ENCODE measurements at regions of chr19 and their contacts with region 1.

Region 1: GRCh38 chr19:5961969-5962945 is 15.7 kb downstream of the RANBP3 start:
- DNase-seq: peak; percentile 93
- H3K4me3 Mint-ChIP-seq: peak overlapping the region; percentile 80
- H3K27ac Mint-ChIP-seq: peak overlapping the region; percentile 98
- H3K4me1 Mint-ChIP-seq: peaks cover 59% of the 10 kb centered on the region
- H3K27me3 Mint-ChIP-seq: no peaks in the 10 kb centered on the region

Region 2: GRCh38 chr19:5977785-5978605 is 15.7 kb after region 1 on chr19 and contains the start of gene RANBP3:
- intact Hi-C with region 1: loop called (anchors 2 kb)
- DNase-seq: peak; percentile 100
- H3K4me3 Mint-ChIP-seq: peak within 1 kb of the TSS; percentile 94
- H3K27ac Mint-ChIP-seq: peak within 1 kb of the TSS; percentile 93
- H3K4me1 Mint-ChIP-seq: peaks cover 55% of the 10 kb centered on the region
- H3K27me3 Mint-ChIP-seq: no peaks in the 10 kb centered on the region
- total RNA-seq, gene RANBP3: 105 and 114 TPM in 2 replicates

Region 3: GRCh38 chr19:6216996-6217485 is 254.8 kb after region 1 on chr19:
- intact Hi-C with region 1: no loop called
- DNase-seq: no peak
- H3K4me3 Mint-ChIP-seq: no peak overlapping the region
- H3K27ac Mint-ChIP-seq: no peak overlapping the region
- H3K4me1 Mint-ChIP-seq: peaks cover 2% of the 10 kb centered on the region
- H3K27me3 Mint-ChIP-seq: no peaks in the 10 kb centered on the region